ENCODE measurements at regions of chr3 and their contacts with region 1.

Region 1: GRCh38 chr3:13657660-13658435 is 108.9 kb downstream of the FBLN2 start:
- DNase-seq: peak; percentile 79
- ATAC-seq: peak; percentile 86
- H3K4me3 ChIP-seq: no peak overlapping the region
- H3K27ac ChIP-seq: no peak overlapping the region
- H3K4me1 ChIP-seq: peaks cover 4% of the 10 kb centered on the region
- H3K27me3 ChIP-seq: no peaks in the 10 kb centered on the region
- CTCF ChIP-seq: peak; percentile 77

Region 2: DNA sequence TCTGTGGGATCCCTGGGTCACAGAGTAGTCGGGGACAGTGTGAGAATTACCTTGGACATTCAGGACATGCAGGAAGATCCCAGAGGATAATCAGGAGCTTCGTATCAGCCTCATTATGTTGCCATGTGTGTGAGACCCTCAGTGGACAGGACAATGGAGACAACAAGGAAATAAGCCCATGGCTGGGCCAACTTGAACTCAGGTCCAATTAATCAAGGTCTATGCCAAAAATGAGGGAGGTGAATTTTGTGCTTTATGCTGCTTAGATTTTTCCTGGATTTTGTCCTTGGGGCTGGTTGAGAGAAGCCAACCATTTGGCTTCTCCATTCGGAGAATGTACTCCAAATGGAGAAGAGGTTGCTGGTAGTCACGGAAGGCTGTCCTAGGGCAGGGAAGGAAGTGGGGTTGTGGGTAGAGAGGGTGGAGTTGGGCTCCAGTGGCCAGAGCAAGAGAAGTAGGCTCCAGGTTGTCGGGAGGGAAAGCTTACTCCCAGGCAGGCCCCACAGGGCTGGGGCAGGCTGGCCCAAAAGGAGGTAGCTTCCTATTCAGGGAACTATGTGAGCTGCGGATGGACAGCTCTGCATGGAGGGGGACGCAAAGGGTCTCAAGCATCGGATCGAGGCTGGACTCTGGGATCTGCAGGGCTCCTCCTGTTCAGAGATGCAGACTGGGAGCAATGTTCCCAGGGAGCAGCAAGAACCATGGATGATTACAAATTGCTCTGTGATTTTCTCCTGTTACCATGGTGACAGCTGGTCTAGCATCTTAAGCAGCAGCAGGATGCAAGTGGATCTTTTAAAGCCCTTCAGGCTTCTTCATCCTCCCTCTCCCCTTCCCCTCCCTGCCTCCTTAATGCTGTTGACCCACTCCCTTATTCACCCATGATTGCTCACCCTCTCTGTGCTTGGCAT is 130.9 kb after region 1 on chr3:
- intact Hi-C with region 1: no loop called
- DNase-seq: peak; percentile 51
- ATAC-seq: no peak
- H3K4me3 ChIP-seq: no peak overlapping the region
- H3K27ac ChIP-seq: no peak overlapping the region
- H3K4me1 ChIP-seq: no peaks in the 10 kb centered on the region
- H3K27me3 ChIP-seq: peaks cover 4% of the 10 kb centered on the region
- CTCF ChIP-seq: no peak

Region 3: DNA sequence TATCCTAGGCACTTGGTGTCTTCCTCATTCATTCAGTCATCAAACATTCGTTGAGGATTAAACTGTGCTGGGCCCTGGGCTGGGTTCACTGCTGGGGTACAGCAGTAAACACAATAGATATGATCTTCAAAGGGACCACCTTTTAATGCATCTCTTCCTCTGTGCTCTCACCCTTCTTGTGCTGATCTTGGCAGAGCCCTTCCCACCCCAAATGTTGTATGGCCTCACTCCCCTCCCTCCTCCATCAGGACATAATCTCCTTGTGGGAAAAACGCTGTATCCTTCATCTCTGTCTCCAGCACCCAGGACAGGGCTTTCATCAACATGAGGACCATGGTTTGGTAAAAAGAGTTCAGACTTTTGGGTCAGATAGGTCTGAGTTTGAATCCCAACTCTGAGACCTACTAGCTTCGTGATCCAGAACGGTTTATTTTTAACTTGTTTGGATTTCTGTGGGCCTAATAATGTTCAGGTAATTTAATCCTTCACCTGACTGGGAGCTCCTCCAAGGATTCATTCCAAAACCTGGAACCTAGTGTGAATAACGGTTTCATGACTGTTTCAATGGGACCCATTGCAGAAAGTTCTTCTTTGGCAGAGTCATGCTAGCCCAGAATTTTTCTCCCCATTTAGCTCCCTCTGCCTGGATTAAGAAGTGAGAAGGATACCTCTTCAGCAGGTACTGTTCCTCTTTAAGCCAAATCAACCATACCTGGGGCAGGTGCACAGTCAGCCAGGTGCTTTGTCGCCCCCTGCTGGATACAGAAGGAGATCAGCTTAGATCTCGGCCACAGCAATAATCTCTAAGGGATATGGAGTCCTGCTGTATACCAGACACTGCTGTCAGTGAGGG is 227.2 kb after region 1 on chr3:
- intact Hi-C with region 1: loop called (anchors 5 kb)
- DNase-seq: peak; percentile 60
- ATAC-seq: peak; percentile 81
- H3K4me3 ChIP-seq: no peak overlapping the region
- H3K27ac ChIP-seq: no peak overlapping the region
- H3K4me1 ChIP-seq: peaks cover 4% of the 10 kb centered on the region
- H3K27me3 ChIP-seq: peaks cover 26% of the 10 kb centered on the region
- CTCF ChIP-seq: peak; percentile 70

Measured in upper lobe of right lung (tissue), 1 donor.